MCF 10A (cell line): ENCODE measurements at regions of chr20 and their contacts with region 1.

Region 1: GRCh38 chr20:2919518-2920245 is 46.4 kb downstream of the PTPRA start:
- DNase-seq: no peak
- H3K4me3 Mint-ChIP-seq: no peak overlapping the region
- H3K27ac Mint-ChIP-seq: no peak overlapping the region
- H3K4me1 Mint-ChIP-seq: peaks cover 10% of the 10 kb centered on the region
- H3K27me3 Mint-ChIP-seq: no peaks in the 10 kb centered on the region
- CTCF ChIP-seq: no peak

Region 2: DNA sequence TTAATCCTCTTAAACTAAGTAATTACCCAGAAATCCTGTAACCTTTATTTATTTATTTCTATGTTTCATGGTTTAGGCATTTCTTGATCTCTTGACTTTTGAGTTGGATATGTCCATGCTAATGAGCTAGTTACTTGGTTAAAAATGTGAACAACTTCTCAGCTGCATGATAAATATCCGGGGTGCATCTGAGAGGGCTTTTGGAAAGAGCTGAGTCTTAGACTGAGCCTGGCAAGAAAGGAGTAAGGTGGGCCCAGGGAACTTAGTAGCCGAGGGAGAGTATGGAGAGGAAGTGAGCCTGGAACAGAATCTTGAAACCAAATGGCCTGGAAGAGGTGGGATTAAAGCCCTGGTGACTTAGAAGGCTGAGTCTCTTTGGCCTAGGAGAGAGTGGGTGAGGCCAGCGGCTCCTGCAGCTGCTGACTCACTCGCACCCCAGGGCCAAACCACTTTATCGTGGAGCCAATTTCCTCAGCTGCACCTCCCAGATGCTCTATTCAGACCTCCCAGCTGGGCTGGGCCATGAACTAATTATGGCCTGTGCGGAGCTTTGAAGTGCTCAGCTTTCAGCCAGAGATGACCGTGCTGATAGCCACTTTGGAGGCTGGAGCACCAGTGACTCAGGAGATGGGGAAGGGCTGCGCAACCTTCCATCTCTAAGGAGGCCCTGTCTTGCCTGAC is 604.8 kb before region 1 on chr20:
- CTCF ChIA-PET with region 1: no interaction called
- POLR2A ChIA-PET with region 1: no interaction called
- intact Hi-C with region 1: no loop called
- DNase-seq: peak; percentile 95
- H3K4me3 Mint-ChIP-seq: peak overlapping the region; percentile 1
- H3K27ac Mint-ChIP-seq: peak overlapping the region; percentile 20
- H3K4me1 Mint-ChIP-seq: peaks cover 20% of the 10 kb centered on the region
- H3K27me3 Mint-ChIP-seq: no peaks in the 10 kb centered on the region
- CTCF ChIP-seq: no peak

Region 3: DNA sequence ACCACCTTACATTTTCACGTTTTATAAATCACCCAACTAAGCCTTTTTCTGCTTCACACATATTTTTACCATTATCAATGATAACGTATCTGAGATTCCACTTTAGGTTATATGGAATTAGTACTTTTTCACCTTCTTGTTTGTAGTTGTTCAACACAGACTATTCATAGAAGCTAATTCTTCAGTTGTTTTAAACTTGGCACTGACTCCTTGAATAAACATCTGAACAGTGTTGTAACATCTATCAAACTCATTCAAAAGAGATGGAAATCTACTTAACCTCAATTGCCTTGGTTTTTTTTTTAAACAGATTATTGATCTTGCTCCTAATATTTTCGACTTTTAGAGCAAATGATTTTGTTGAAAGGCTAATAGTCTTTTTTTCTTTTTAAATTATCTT is 12.2 kb before region 1 on chr20:
- CTCF ChIA-PET with region 1: interaction called, 10 read pairs
- POLR2A ChIA-PET with region 1: interaction called, 3 read pairs
- intact Hi-C with region 1: no loop called
- DNase-seq: no peak
- H3K4me3 Mint-ChIP-seq: no peak overlapping the region
- H3K27ac Mint-ChIP-seq: no peak overlapping the region
- H3K4me1 Mint-ChIP-seq: peaks cover 5% of the 10 kb centered on the region
- H3K27me3 Mint-ChIP-seq: no peaks in the 10 kb centered on the region
- CTCF ChIP-seq: no peak

Region 4: DNA sequence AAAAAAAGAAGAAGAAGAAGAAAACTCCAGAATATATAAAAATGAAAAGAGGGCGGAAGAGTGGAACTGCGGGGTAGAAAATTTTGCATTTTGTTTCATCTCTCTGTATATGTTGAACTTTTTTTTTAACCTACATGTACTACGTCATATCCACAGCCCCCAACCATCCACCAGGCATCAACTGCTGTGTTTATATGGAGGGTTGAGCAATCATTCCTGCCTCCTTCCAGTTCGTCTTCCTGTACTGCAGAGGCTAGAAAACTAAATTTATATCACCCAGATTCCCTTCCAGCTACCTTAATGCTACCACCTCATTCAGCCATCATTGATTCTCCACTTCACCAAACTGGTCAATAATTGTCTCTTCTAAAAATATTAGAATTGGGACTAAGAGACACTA is 802.2 kb after region 1 on chr20:
- CTCF ChIA-PET with region 1: no interaction called
- POLR2A ChIA-PET with region 1: no interaction called
- intact Hi-C with region 1: no loop called
- DNase-seq: no peak
- H3K4me3 Mint-ChIP-seq: no peak overlapping the region
- H3K27ac Mint-ChIP-seq: no peak overlapping the region
- H3K4me1 Mint-ChIP-seq: peaks cover 2% of the 10 kb centered on the region
- H3K27me3 Mint-ChIP-seq: peaks cover 56% of the 10 kb centered on the region
- CTCF ChIP-seq: no peak